ENCODE measurements at regions of chr1 and their contacts with region 1.

Region 1: GRCh38 chr1:171521567-171521966 is 36.2 kb downstream of the PRRC2C start:
- DNase-seq: no peak
- H3K4me3 ChIP-seq: no peak overlapping the region
- H3K27ac ChIP-seq: no peak overlapping the region
- H3K4me1 ChIP-seq: peaks cover 0 to 12% of the 10 kb centered on the region in 2 donors
- H3K27me3 ChIP-seq: no peaks in the 10 kb centered on the region
- CTCF ChIP-seq: no peak
- POLR2A ChIP-seq: no peak

Region 2: DNA sequence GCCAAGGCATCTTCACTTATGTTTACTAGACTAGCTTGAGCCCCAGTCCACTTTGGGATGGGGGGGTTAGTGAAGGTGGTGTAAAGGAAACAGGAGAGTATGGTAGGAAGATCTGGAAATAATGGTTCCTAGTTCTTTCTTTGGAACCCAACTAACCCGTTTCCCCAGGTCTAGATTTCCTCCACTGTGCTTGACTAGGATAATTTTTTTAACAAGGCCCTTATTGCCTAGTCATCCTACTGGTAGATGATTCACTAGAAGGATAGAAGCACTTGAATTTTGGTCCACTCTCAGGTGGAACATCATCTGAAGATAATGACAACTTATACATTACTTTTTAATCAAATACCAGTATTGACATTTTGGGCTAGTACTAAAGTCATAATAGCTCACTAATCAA is 54.6 kb after region 1 on chr1:
- intact Hi-C with region 1: loop called in 1 of 2 experiments (anchors 10 kb)
- DNase-seq: no peak
- H3K4me3 ChIP-seq: no peak overlapping the region
- H3K27ac ChIP-seq: no peak overlapping the region
- H3K4me1 ChIP-seq: no peaks in the 10 kb centered on the region
- H3K27me3 ChIP-seq: no peaks in the 10 kb centered on the region
- CTCF ChIP-seq: no peak
- POLR2A ChIP-seq: no peak